CD4-positive, alpha-beta T cell (primary cell): ENCODE measurements at regions of chr11 and their contacts with region 1.

Region 1: DNA sequence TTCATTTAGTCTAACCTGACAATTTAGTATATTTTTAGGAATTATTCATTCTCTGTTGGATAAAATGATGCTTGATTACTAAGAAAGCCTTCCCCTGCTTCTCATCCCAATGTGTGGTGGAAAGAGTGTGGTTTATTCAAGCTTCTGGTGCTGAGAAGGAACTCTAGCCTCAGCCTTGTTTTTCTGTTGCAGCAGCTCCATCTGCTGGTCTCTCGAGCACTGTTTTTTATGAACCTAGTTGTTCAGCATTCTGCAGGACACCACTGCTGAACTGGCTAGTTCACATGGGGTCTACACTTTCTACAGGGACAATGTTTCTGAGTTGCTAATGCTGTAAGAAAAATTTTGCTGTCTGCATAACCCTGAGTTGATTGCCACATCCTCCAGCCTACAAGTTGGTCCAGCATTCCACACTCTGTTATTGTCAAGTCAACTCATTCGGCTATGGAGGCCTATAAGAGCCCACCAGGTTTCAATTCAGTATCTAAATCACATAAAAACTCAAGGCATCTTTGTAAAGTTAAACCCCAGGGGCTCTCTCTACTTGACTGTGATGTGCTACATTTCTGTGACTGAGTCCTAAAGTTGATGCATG is 14.3 kb downstream of the OR2AG2 start:
- DNase-seq: peak; percentile 37 to 82 (median 56)
- ATAC-seq: peak; percentile 83
- H3K4me3 ChIP-seq: no peak overlapping the region
- H3K4me3 Mint-ChIP-seq: no peak overlapping the region
- H3K27ac ChIP-seq: no peak overlapping the region
- H3K27ac Mint-ChIP-seq: no peak overlapping the region
- H3K4me1 ChIP-seq: no peaks in the 10 kb centered on the region
- H3K4me1 Mint-ChIP-seq: peaks cover 14% of the 10 kb centered on the region
- H3K27me3 ChIP-seq: no peaks in the 10 kb centered on the region
- H3K27me3 Mint-ChIP-seq: peaks cover 11% of the 10 kb centered on the region
- CTCF ChIP-seq: peak; percentile 86

Region 2: DNA sequence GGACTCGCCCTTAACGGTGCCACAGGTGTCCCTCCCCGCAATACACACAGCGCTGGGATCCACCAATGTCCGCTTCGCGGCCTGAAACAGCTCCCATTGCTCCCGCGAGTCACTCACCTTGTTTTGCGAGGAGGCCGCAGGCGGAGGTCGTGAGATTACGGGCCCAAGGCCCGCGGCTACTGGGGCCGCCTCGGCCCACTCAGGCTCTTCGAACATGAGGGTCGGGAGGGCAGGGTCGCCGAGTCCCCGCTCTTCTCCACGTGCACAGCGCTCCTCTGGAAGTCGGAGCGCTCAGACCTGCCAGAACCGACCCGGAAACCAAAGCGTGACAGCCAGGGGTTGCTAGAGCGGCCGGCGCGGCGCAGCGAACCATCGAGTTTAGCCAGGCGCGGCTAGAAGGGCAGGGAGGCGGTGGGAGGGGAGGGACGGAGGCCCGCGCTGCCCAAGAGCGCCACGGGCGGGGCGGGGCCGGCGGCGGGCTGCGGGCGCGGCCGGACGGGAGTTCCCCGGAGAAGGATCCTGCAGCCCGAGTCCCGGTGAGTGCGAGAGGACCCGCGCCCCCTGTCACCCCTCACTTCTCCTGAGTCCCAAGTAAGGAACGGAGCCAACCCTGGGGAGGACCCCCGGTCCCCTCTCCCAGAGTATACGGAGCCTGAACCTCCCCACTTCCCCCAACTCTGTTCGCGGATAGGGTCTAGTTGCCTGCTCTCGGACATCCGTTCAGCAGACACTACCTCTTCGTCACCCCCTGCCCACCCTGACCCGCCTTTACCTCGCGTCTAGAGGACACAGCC is 154.0 kb before region 1 on chr11 and contains the starts of genes ILK and RRP8:
- CTCF ChIA-PET with region 1: interaction called, 3 read pairs
- POLR2A ChIA-PET with region 1: no interaction called
- intact Hi-C with region 1: loop called (anchors 5 kb)
- DNase-seq: peak; percentile 73 to 94 (median 83)
- ATAC-seq: peak; percentile 75
- H3K4me3 ChIP-seq: peak within 1 kb of the TSS; percentile 78
- H3K4me3 Mint-ChIP-seq: no peak within 1 kb of the TSS
- H3K27ac ChIP-seq: peak within 1 kb of the TSS; percentile 81 to 87
- H3K27ac Mint-ChIP-seq: no peak within 1 kb of the TSS
- H3K4me1 ChIP-seq: peaks cover 73% of the 10 kb centered on the region
- H3K4me1 Mint-ChIP-seq: peaks cover 22% of the 10 kb centered on the region
- H3K27me3 ChIP-seq: no peaks in the 10 kb centered on the region
- H3K27me3 Mint-ChIP-seq: no peaks in the 10 kb centered on the region
- CTCF ChIP-seq: no peak
- total RNA-seq, gene ILK: 19.2 to 21.0 TPM
- total RNA-seq, gene RRP8: 25.7 to 27.3 TPM

Region 3: DNA sequence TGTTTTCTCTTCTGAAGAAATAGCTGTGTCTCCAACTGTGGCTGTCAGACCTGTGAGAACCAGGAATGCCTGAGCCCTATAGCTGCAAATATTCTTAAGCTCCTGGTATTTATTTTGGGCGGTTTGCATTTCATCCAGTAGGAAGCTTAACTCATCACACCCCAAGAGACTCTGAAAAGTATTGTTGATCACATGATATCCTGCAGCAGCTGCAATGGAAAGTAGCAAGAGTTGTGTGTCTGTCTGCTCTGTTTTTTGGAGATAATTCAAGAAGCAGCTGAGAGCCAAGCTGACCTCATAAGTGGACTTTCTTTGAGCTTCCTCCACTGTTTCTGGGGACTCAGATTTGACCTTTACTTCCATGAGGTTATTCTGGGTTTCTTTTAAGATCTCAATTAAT is 37.9 kb before region 1 on chr11:
- CTCF ChIA-PET with region 1: interaction called, 11 read pairs
- POLR2A ChIA-PET with region 1: interaction called, 4 read pairs
- intact Hi-C with region 1: no loop called
- DNase-seq: no peak
- ATAC-seq: no peak
- H3K4me3 ChIP-seq: no peak overlapping the region
- H3K4me3 Mint-ChIP-seq: no peak overlapping the region
- H3K27ac ChIP-seq: no peak overlapping the region
- H3K27ac Mint-ChIP-seq: peak overlapping the region; percentile 62
- H3K4me1 ChIP-seq: peaks cover 43% of the 10 kb centered on the region
- H3K4me1 Mint-ChIP-seq: peaks cover 62% of the 10 kb centered on the region
- H3K27me3 ChIP-seq: no peaks in the 10 kb centered on the region
- H3K27me3 Mint-ChIP-seq: no peaks in the 10 kb centered on the region
- CTCF ChIP-seq: no peak

Region 4: DNA sequence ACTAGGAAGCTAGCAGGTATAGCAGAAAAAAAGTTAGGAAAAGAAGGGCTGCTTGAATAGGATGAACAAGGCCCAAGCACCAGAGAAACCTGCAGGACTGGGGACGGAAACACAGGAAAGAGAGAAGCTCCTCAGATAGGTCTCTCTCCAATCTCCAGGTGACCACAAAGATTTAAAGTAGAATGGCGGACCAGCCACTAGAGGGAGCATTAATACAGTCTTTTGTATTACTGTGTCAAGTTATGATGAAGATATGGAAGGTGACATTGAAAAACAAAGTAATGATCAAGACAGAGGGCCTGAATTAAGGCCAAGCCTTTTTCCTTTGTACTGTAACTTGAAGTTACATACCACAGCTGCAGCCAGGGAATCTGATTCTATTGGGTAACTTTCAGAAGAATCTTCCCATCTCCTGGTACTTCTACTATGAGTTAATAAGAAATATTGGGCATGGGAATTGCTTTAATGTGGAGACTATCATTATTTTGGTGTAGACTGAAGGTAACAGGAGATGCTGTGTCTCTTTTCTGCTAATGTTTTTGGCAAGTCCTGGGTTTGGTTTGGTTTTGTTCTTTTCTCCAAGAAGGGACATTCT is 19.5 kb before region 1 on chr11:
- CTCF ChIA-PET with region 1: interaction called, 181 read pairs
- POLR2A ChIA-PET with region 1: interaction called, 15 read pairs
- intact Hi-C with region 1: loop called (anchors 1 kb)
- DNase-seq: peak; percentile 27 to 88 (median 57)
- ATAC-seq: peak; percentile 56
- H3K4me3 ChIP-seq: no peak overlapping the region
- H3K4me3 Mint-ChIP-seq: peak overlapping the region; percentile 12
- H3K27ac ChIP-seq: peak overlapping the region; percentile 2 to 56
- H3K27ac Mint-ChIP-seq: peak overlapping the region; percentile 76
- H3K4me1 ChIP-seq: peaks cover 62% of the 10 kb centered on the region
- H3K4me1 Mint-ChIP-seq: peaks cover 88% of the 10 kb centered on the region
- H3K27me3 ChIP-seq: no peaks in the 10 kb centered on the region
- H3K27me3 Mint-ChIP-seq: no peaks in the 10 kb centered on the region
- CTCF ChIP-seq: peak; percentile 77

Region 5: GRCh38 chr11:7520981-7521487 is 763.6 kb after region 1 on chr11:
- CTCF ChIA-PET with region 1: no interaction called
- POLR2A ChIA-PET with region 1: no interaction called
- intact Hi-C with region 1: loop called in 1 of 2 experiments (anchors 10 kb)
- DNase-seq: peak in 2 of 14 experiments; percentile 39 to 40
- ATAC-seq: peak; percentile 53
- H3K4me3 ChIP-seq: no peak overlapping the region
- H3K4me3 Mint-ChIP-seq: no peak overlapping the region
- H3K27ac ChIP-seq: peak overlapping the region in 1 of 2 donors; percentile 13
- H3K27ac Mint-ChIP-seq: no peak overlapping the region
- H3K4me1 ChIP-seq: peaks cover 2% of the 10 kb centered on the region
- H3K4me1 Mint-ChIP-seq: peaks cover 60% of the 10 kb centered on the region
- H3K27me3 ChIP-seq: no peaks in the 10 kb centered on the region
- H3K27me3 Mint-ChIP-seq: no peaks in the 10 kb centered on the region
- CTCF ChIP-seq: no peak